ENCODE measurements at regions of chr2 and their contacts with region 1.

Region 1: GRCh38 chr2:147989809-147990403 is 30.6 kb downstream of the ORC4 start:
- DNase-seq: peak; percentile 13 to 18
- H3K4me3 ChIP-seq: no peak overlapping the region
- H3K27ac ChIP-seq: no peak overlapping the region
- H3K4me1 ChIP-seq: peaks cover 8 to 12% of the 10 kb centered on the region in 2 donors
- H3K27me3 ChIP-seq: no peaks in the 10 kb centered on the region
- CTCF ChIP-seq: peak; percentile 13 to 96 (median 59)
- POLR2A ChIP-seq: no peak

Region 2: DNA sequence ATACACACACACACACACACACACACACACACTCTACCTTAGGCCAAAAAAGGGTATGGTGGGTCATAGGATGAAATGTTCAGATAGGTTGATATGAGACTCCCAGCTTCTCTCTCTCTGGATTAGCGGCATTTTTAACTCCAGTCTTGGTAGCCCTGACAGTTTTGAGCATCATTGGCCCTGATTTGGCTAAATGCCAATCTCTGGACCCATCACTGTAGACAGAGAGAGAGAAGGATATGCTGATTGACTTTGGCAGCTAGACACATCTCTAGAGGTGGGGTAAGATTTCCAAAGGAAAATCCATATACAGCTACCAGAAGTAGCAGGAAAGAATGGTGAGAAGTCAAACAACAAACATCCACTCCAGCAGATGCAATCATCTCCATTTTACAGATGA is 340.2 kb after region 1 on chr2:
- intact Hi-C with region 1: no loop called
- DNase-seq: no peak
- H3K4me3 ChIP-seq: no peak overlapping the region
- H3K27ac ChIP-seq: no peak overlapping the region
- H3K4me1 ChIP-seq: no peaks in the 10 kb centered on the region
- H3K27me3 ChIP-seq: no peaks in the 10 kb centered on the region
- CTCF ChIP-seq: no peak
- POLR2A ChIP-seq: no peak

Region 3: DNA sequence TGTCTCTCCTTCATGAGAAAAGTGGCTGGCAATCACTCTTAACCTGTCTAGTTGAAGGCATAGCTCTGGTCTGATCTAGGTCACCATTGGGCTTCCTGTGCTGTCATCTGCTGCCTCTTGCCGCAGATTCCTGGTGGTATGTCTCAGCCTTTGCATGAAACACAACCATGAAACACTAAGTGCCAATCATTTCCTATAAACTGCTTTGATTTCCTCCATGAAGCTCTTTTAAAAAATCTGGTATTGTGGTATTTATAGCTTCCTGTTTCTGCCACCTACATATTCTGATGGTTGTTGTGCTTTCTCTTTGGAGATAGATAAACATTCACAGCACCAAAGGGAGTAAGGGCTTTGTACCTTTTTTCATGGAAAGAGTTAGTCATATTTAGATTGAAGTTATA is 534.6 kb after region 1 on chr2:
- intact Hi-C with region 1: loop called (anchors 10 kb)
- DNase-seq: no peak
- H3K4me3 ChIP-seq: no peak overlapping the region
- H3K27ac ChIP-seq: peak overlapping the region; percentile 26 to 55 (median 31)
- H3K4me1 ChIP-seq: peaks cover 20 to 22% of the 10 kb centered on the region in 2 donors
- H3K27me3 ChIP-seq: no peaks in the 10 kb centered on the region
- CTCF ChIP-seq: no peak
- POLR2A ChIP-seq: no peak

Measured in thyroid gland (tissue), 4 donors.